GM12878 (cell line): ENCODE measurements at regions of chr3 and their contacts with region 1.

Region 1: DNA sequence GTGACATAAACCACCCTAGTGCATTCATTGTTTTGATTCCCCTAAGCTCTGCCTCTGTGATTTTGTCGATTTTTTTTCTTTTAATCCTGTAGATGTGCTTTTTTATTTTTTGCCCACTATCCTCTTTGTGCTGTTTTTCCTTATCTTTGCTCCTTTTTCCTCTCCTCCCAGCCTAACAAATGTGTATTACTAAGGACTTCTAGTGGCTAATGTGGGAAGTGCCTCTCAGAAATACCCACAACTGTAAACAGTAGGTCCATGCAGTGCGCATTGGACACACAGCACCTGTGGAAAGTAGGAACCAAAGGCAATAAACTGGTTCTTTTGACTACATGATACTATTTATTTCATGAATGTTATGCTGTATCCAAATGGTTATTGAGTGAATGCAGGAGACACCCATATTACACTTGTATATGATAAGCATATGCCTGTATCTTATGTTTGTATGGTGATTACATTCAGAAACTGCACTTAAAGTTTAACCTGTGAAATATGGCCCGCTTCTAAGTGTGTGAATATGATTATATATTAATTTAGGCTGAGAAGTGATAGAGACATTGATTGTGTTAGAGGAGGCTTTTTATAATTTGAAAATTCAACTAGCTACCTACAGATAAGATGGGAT is 147.8 kb downstream of the PLCL2 start:
- DNase-seq: no peak
- ATAC-seq: peak; percentile 81
- H3K4me3 ChIP-seq: no peak overlapping the region
- H3K27ac ChIP-seq: no peak overlapping the region
- H3K4me1 ChIP-seq: peaks cover 15% of the 10 kb centered on the region
- H3K27me3 ChIP-seq: no peaks in the 10 kb centered on the region
- CTCF ChIP-seq: peak; percentile 54 to 64 (median 54); a peak in 5 of 6 replicates
- EP300 ChIP-seq: no peak
- POLR2A ChIP-seq: no peak
- RAD21 ChIP-seq: peak; percentile 76

Region 2: DNA sequence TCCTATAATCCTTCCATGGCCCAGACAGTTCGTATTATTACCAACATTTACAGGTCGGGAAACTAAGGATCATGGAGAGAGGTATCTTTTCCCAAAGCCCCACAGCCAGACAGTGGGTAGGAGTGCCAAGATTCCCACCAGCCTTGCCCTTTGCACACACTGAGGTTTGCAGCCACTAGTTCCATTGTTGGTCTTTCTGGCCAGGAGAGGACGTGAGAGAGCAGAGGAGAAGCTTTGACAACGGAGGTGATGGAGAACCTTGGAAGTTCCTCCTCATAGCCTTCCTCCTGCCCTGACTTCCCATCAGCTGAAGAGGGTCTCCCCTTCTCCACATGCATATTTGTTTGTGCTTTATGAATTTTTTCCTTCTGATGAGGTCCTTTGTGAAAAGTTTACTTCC is 198.3 kb before region 1 on chr3:
- CTCF ChIA-PET with region 1: interaction called, 39 read pairs
- POLR2A ChIA-PET with region 1: no interaction called
- RAD21 ChIA-PET with region 1: interaction called, 34 read pairs
- SMC1A ChIA-PET with region 1: interaction called, 15 read pairs
- in situ Hi-C with region 1: no loop called
- intact Hi-C with region 1: loop called (anchors 5 kb)
- DNase-seq: no peak
- ATAC-seq: no peak
- H3K4me3 ChIP-seq: no peak overlapping the region
- H3K27ac ChIP-seq: no peak overlapping the region
- H3K4me1 ChIP-seq: peaks cover 19% of the 10 kb centered on the region
- H3K27me3 ChIP-seq: no peaks in the 10 kb centered on the region
- CTCF ChIP-seq: peak in 2 of 3 experiments; percentile 28 to 31; a peak in 2 of 6 replicates
- EP300 ChIP-seq: no peak
- POLR2A ChIP-seq: no peak
- RAD21 ChIP-seq: peak; percentile 51

Region 3: DNA sequence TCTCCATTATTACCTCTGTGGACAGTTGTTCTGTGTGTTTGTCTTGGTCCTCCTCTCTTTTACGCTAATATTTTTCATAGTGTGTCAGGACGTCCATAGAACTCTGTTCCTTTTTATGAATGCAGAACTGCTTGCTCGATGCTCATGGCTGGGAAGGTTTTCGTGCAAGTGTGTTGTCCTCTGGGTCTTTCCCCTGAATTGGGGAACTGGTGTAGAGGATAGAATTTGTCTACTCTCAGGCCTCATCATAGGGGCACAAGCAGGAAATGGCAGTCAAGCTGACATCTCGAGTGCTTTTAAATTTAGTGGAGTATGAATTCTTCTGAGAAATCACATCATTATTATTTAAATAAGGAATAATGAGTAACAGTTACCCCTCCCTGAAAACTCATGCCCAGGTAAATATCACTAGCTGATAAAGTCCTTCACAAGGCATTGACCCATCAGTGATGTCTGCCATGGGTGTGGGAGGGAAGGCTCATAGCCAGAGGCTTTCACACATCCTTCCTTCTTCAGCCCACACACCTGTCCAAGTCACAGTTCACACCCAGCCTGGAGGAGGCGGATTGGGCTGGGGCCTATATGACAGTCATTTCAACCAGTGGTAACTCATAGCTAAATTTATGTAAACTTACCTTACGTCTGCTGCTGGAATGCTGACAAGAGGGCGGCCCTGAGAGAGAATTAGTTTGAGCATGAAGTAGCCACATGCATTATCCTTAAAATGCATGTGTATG is 78.3 kb after region 1 on chr3:
- CTCF ChIA-PET with region 1: no interaction called
- POLR2A ChIA-PET with region 1: no interaction called
- RAD21 ChIA-PET with region 1: no interaction called
- SMC1A ChIA-PET with region 1: no interaction called
- in situ Hi-C with region 1: no loop called
- intact Hi-C with region 1: no loop called
- DNase-seq: no peak
- ATAC-seq: peak; percentile 45; the same call in 2 of the 3 replicates
- H3K4me3 ChIP-seq: no peak overlapping the region
- H3K27ac ChIP-seq: no peak overlapping the region
- H3K4me1 ChIP-seq: no peaks in the 10 kb centered on the region; the same call in 1 of the 2 replicates
- H3K27me3 ChIP-seq: no peaks in the 10 kb centered on the region
- CTCF ChIP-seq: no peak
- EP300 ChIP-seq: no peak
- POLR2A ChIP-seq: no peak
- RAD21 ChIP-seq: no peak